ENCODE measurements at regions of chr6 and their contacts with region 1.

Region 1: DNA sequence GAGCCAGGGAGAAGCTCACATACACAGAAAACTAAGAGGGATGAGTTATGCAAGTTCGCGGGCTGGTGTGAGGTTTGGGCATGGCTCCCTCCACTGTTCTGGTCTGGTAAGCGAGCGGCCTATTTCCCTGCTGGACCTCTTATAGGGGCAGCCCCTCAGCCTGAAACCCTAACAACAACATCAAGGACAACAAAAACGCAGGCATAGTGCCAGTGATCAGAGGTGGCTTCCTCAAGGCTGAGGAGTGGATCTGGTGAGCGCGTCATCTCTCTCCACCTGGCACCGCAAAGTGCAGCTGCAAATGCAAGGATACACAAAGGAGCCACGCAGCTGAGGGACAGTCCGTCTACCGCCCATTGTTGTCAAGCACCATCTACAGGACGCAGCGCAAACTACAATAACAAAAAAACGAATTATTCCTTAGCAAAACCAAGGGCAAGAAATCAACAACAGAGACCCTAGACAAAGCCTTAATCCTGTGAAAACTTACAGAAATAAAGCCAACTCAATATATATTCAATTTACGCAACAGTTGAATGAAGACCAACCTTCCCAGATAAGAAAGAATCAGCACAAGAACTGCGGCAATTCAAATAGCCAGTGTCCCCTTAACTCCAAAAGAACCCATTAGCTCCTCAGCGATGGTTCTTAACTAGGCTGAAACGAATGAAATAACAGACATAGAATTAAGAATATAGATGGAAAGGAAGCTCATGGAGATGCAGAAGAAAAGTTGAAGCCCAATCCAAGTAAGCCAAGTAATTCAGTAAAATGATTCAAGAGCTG is 9.2 kb upstream of the DEFB110 start:
- DNase-seq: peak; percentile 64
- ATAC-seq: peak; percentile 88
- H3K4me3 ChIP-seq: no peak overlapping the region
- H3K27ac ChIP-seq: no peak overlapping the region
- H3K4me1 ChIP-seq: no peaks in the 10 kb centered on the region
- H3K27me3 ChIP-seq: peaks cover 33% of the 10 kb centered on the region
- CTCF ChIP-seq: peak; percentile 74

Region 2: GRCh38 chr6:49625140-49625539 is 405.8 kb before region 1 on chr6:
- CTCF ChIA-PET with region 1: no interaction called
- POLR2A ChIA-PET with region 1: no interaction called
- intact Hi-C with region 1: loop called (anchors 5 kb)
- DNase-seq: peak; percentile 39
- ATAC-seq: no peak
- H3K4me3 ChIP-seq: no peak overlapping the region
- H3K27ac ChIP-seq: no peak overlapping the region
- H3K4me1 ChIP-seq: peaks cover 6% of the 10 kb centered on the region; the same call in 1 of the 2 replicates
- H3K27me3 ChIP-seq: no peaks in the 10 kb centered on the region
- CTCF ChIP-seq: no peak

Region 3: GRCh38 chr6:49855221-49855620 is 175.7 kb before region 1 on chr6:
- CTCF ChIA-PET with region 1: no interaction called
- POLR2A ChIA-PET with region 1: no interaction called
- intact Hi-C with region 1: loop called (anchors 1 kb)
- DNase-seq: no peak
- ATAC-seq: no peak
- H3K4me3 ChIP-seq: no peak overlapping the region
- H3K27ac ChIP-seq: no peak overlapping the region
- H3K4me1 ChIP-seq: no peaks in the 10 kb centered on the region
- H3K27me3 ChIP-seq: no peaks in the 10 kb centered on the region
- CTCF ChIP-seq: no peak

Region 4: DNA sequence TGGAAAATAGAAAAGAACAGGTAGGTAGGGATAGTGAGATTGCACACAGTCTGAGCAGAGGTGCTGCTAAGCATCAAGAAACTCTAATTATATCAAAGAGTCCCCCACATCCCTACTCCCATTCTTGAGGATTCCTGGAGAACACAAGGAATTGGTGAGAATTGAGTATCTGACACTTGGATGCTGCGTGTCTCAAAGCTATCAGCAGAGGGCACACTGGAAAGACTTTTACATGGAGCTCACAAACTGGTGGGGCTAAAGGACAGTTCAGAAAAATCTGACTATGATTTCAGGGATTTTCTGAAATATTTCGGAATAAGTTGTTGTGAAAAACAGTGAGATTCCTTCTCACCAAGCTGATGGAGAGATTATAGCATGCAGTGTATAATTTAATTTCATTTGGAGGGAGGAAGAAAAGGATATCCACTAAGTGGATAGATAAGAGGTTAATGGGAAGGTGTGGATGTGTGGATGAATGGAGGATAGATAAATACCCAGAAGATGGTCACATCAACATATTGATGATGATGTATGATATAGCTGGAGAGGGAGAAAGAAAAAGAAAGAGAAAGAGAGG is 234.1 kb after region 1 on chr6:
- CTCF ChIA-PET with region 1: no interaction called
- POLR2A ChIA-PET with region 1: no interaction called
- intact Hi-C with region 1: no loop called
- DNase-seq: peak; percentile 42
- ATAC-seq: no peak; the same call in 1 of the 2 replicates
- H3K4me3 ChIP-seq: no peak overlapping the region
- H3K27ac ChIP-seq: no peak overlapping the region
- H3K4me1 ChIP-seq: no peaks in the 10 kb centered on the region
- H3K27me3 ChIP-seq: peaks cover 23% of the 10 kb centered on the region
- CTCF ChIP-seq: peak; percentile 63